ENCODE measurements at regions of chr6 and their contacts with region 1.

Region 1: DNA sequence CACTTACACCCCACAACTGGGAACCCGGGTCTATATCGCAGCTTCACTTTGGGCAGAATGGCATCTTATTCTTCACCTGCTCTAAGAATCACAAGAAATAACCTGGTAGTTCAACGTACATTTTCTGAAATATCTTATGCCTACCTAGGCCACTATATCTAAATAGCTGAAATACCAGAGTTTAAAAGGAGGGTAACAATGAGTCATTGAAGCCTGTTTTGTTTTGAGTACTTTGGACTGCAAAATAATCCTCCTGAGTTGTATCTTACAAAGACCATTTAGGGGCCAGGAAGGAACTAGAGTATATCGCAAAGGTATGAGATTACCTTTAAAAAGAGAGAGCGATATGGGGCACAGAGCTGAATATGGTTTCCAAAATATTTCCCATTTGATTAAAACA is 96.7 kb upstream of the NUP153 start:
- DNase-seq: no peak
- H3K4me3 ChIP-seq: no peak overlapping the region
- H3K27ac ChIP-seq: no peak overlapping the region
- H3K4me1 ChIP-seq: no peaks in the 10 kb centered on the region
- H3K27me3 ChIP-seq: no peaks in the 10 kb centered on the region
- CTCF ChIP-seq: no peak
- POLR2A ChIP-seq: no peak

Region 2: DNA sequence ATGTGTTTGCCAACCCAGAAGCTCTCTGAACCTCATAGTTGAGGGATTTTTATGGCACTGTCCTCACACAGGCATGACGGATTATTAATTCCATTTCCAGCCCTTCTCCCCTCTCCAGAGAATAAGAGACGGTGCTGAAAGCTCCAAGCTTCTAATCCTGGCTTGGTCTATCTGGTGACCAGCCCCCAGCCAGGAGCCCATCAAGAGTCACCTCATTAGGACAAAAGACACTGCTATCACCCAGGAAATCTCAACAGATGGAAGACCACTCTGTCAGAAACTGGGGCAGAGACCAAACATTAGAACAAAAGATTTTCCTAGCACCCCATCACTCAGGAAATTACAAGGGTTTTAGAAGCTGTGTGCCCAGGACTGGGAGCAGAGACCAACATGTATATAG is 653.3 kb before region 1 on chr6:
- intact Hi-C with region 1: loop called (anchors 5 kb)
- DNase-seq: no peak
- H3K4me3 ChIP-seq: no peak overlapping the region
- H3K27ac ChIP-seq: no peak overlapping the region
- H3K4me1 ChIP-seq: no peaks in the 10 kb centered on the region
- H3K27me3 ChIP-seq: no peaks in the 10 kb centered on the region
- CTCF ChIP-seq: no peak
- POLR2A ChIP-seq: no peak

Measured in uterus (tissue), 4 donors.